CD14-positive monocyte (primary cell): ENCODE measurements at regions of chr3 and their contacts with region 1.

Region 1: GRCh38 chr3:45199837-45200648 is 26.0 kb downstream of the TMEM158 start:
- DNase-seq: no peak
- H3K4me3 ChIP-seq: no peak overlapping the region
- H3K4me3 Mint-ChIP-seq: no peak overlapping the region
- H3K27ac ChIP-seq: no peak overlapping the region
- H3K27ac Mint-ChIP-seq: no peak overlapping the region
- H3K4me1 ChIP-seq: no peaks in the 10 kb centered on the region
- H3K4me1 Mint-ChIP-seq: peaks cover 1% of the 10 kb centered on the region
- H3K27me3 ChIP-seq: no peaks in the 10 kb centered on the region
- H3K27me3 Mint-ChIP-seq: peaks cover 4 to 9% (median 5%) of the 10 kb centered on the region in 3 donors
- CTCF ChIP-seq: no peak

Region 2: GRCh38 chr3:45145681-45146614 is 54.1 kb before region 1 on chr3 and contains the start of gene CDCP1:
- intact Hi-C with region 1: loop called in 1 of 2 experiments (anchors 10 kb)
- DNase-seq: peak in 1 of 3 donors; percentile 32
- H3K4me3 ChIP-seq: peak within 1 kb of the TSS; percentile 44 to 75 (median 51)
- H3K4me3 Mint-ChIP-seq: peak within 1 kb of the TSS; percentile 94 to 98
- H3K27ac ChIP-seq: no peak within 1 kb of the TSS
- H3K27ac Mint-ChIP-seq: peak within 1 kb of the TSS; percentile 66 to 91 (median 87)
- H3K4me1 ChIP-seq: peaks cover 22 to 26% of the 10 kb centered on the region in 2 donors
- H3K4me1 Mint-ChIP-seq: peaks cover 20% of the 10 kb centered on the region
- H3K27me3 ChIP-seq: peaks cover 26 to 36% of the 10 kb centered on the region in 2 donors
- H3K27me3 Mint-ChIP-seq: peaks cover 38 to 45% (median 44%) of the 10 kb centered on the region in 3 donors
- CTCF ChIP-seq: no peak
- polyA plus RNA-seq, gene CDCP1: 0.42 to 1.3 (median 0.52) TPM

Region 3: GRCh38 chr3:45244356-45244755 is 44.3 kb after region 1 on chr3:
- intact Hi-C with region 1: no loop called
- DNase-seq: no peak
- H3K4me3 ChIP-seq: no peak overlapping the region
- H3K4me3 Mint-ChIP-seq: no peak overlapping the region
- H3K27ac ChIP-seq: no peak overlapping the region
- H3K27ac Mint-ChIP-seq: no peak overlapping the region
- H3K4me1 ChIP-seq: no peaks in the 10 kb centered on the region
- H3K4me1 Mint-ChIP-seq: peaks cover 4% of the 10 kb centered on the region
- H3K27me3 ChIP-seq: no peaks in the 10 kb centered on the region
- H3K27me3 Mint-ChIP-seq: peaks cover 4 to 5% (median 4%) of the 10 kb centered on the region in 3 donors
- CTCF ChIP-seq: no peak

Region 4: DNA sequence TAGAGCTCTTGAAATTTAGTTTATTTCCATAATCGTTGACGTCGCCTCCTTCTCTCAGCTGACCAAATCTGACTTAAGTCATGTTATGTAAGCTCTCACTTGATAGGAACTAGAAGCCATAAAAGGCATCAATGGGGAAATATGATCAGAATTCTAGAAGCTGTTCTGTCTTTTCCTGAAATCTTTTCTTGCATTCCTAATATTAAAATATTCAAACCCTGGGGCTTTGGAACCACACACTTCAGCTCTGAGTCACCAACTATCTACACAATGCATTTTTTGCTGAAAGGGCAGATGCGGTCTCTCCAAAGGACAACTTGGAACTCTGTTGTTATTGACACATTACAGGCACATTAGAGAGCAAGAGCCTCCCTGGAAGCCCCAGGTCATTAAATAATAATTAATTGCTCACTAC is 279.6 kb after region 1 on chr3:
- intact Hi-C with region 1: no loop called
- DNase-seq: no peak
- H3K4me3 ChIP-seq: no peak overlapping the region
- H3K4me3 Mint-ChIP-seq: no peak overlapping the region
- H3K27ac ChIP-seq: no peak overlapping the region
- H3K27ac Mint-ChIP-seq: no peak overlapping the region
- H3K4me1 ChIP-seq: no peaks in the 10 kb centered on the region
- H3K4me1 Mint-ChIP-seq: peaks cover 8% of the 10 kb centered on the region
- H3K27me3 ChIP-seq: no peaks in the 10 kb centered on the region
- H3K27me3 Mint-ChIP-seq: no peaks in the 10 kb centered on the region
- CTCF ChIP-seq: no peak